Cardiac septum (tissue), 1 donor: ENCODE measurements at regions of chr5 and their contacts with region 1.

Region 1: DNA sequence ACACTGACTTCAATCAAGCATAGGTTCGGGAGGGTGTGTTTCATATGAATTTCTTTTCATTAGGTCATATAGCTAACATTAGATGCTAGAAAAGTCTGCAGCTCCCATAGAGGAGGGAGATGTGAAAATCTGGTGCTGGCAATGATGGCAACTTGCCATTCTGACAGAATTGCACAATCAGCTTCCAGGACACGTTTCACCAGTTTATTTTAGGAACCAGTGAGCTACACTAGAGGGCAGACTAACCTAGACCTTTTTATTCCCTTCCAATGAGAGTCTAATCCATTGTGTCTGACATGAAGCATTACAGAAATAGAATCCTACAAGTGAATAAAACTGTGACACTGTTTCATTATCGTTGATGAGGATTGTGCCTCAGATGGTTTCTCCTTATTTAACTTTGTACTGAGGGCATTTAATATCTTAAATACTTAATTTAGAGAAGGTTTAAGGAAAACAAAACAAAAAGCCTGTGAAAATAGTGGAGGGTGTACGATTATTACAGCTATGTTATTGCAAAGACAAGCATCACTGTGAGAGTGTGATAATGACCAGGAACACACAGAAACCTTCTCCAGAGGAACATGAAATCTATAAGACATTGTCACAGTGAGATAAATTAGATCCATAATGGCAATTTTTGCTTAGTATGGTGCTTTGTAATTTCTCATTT is 363.3 kb upstream of the RPS23 start:
- DNase-seq: no peak

Region 2: GRCh38 chr5:82312373-82312856 is 329.1 kb before region 1 on chr5:
- intact Hi-C with region 1: loop called (anchors 2 kb)
- DNase-seq: no peak

Region 3: DNA sequence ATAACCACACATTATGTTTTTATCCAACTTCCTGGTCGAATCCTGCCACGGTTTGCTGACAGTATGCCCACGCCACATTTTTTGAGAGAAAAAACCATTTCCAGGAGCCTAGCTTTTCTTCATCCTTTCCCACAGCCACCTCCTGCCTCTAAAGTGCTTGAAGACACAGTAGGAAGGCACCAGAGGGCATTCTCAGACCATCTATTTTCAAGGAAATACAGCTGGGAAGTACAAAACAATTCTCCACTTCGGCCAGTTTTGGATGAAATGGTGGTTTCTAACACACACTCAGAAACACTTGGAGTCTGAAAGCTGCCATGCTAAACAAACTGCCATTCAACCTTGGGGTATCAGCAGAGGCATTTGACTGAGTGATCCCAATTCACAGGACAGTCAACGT is 277.0 kb before region 1 on chr5:
- intact Hi-C with region 1: loop called (anchors 5 kb)
- DNase-seq: no peak

Region 4: DNA sequence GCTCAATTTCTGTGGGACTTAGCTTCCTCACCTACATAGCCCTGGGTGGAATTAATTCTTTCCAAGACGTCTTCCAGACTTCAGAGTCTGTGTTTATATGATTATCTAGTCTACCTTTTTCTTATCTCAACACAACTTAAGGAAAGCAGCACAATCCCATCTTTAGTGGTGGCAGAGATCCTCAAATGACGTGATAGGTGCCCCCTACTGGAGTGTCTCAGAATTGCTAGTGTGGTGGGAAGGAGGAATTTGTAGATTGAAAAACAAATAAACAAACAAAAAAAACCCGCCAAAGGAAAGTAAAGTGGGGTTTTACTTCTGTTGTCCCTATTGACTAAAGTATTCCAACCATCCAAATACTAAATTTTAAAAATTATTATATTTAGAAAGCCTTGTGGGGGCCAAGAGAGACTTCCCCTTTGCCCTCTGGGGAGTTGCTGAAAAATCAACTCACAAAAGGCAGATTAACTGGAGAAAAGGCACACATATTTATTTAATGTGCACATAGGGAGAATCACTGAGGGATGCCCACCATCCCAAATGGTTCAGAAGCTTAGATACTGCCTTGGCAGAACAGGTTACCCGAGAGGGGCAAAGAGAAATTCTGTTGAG is 152.4 kb after region 1 on chr5:
- intact Hi-C with region 1: loop called (anchors 5 kb)
- DNase-seq: no peak

Region 5: GRCh38 chr5:83564069-83564749 is 922.7 kb after region 1 on chr5:
- intact Hi-C with region 1: loop called (anchors 2 kb)
- DNase-seq: no peak